ENCODE measurements at regions of chr6 and their contacts with region 1.

Region 1: GRCh38 chr6:134097114-134097707 is 44.8 kb upstream of the SLC2A12 start:
- DNase-seq: peak; percentile 74
- H3K4me3 Mint-ChIP-seq: no peak overlapping the region
- H3K27ac Mint-ChIP-seq: no peak overlapping the region
- H3K4me1 Mint-ChIP-seq: no peaks in the 10 kb centered on the region
- H3K27me3 Mint-ChIP-seq: peaks cover 18% of the 10 kb centered on the region
- CTCF ChIP-seq: peak; percentile 73

Region 2: DNA sequence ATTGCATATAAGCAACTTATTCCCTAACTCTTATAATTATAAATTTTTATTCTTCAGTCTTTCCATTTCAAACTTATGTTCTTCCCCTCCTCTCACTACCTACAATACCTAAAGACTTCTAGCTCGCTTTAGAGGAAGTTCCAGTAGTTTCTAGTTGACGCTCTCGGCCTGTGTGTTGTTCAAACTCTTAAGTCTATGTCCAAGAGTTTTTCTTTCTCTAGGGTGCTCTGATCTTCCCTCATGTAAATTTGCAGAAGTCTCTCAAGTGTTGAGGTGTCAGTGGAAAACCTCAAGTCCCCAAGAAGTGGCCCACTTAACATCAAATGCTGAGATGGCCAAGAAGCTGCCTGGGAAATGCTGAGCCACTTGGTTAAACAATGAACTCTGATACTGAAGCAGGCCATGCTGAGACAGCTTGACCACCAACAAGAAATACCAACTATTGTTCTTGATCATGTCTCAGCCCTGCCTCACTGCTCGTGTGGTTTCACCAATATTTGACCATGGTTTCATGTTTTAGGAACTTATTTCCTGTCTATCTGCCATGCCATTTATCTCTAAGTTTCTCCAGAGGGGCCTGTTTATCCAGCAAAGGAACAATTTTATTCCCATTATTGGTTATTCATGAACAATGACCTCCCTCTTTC is 309.2 kb before region 1 on chr6:
- CTCF ChIA-PET with region 1: no interaction called
- intact Hi-C with region 1: no loop called
- DNase-seq: no peak
- H3K4me3 Mint-ChIP-seq: no peak overlapping the region
- H3K27ac Mint-ChIP-seq: no peak overlapping the region
- H3K4me1 Mint-ChIP-seq: no peaks in the 10 kb centered on the region
- H3K27me3 Mint-ChIP-seq: no peaks in the 10 kb centered on the region
- CTCF ChIP-seq: no peak

Region 3: GRCh38 chr6:133837801-133838349 is 259.3 kb before region 1 on chr6:
- CTCF ChIA-PET with region 1: interaction called, 6 read pairs
- intact Hi-C with region 1: loop called (anchors 10 kb)
- DNase-seq: peak; percentile 86
- H3K4me3 Mint-ChIP-seq: peak overlapping the region; percentile 87
- H3K27ac Mint-ChIP-seq: peak overlapping the region; percentile 70
- H3K4me1 Mint-ChIP-seq: peaks cover 7% of the 10 kb centered on the region
- H3K27me3 Mint-ChIP-seq: no peaks in the 10 kb centered on the region
- CTCF ChIP-seq: peak; percentile 93

Region 4: GRCh38 chr6:133923938-133924593 is 173.1 kb before region 1 on chr6:
- CTCF ChIA-PET with region 1: interaction called, 103 read pairs
- intact Hi-C with region 1: loop called (anchors 1 kb)
- DNase-seq: peak; percentile 70
- H3K4me3 Mint-ChIP-seq: no peak overlapping the region
- H3K27ac Mint-ChIP-seq: no peak overlapping the region
- H3K4me1 Mint-ChIP-seq: no peaks in the 10 kb centered on the region
- H3K27me3 Mint-ChIP-seq: no peaks in the 10 kb centered on the region
- CTCF ChIP-seq: peak; percentile 70

Region 5: DNA sequence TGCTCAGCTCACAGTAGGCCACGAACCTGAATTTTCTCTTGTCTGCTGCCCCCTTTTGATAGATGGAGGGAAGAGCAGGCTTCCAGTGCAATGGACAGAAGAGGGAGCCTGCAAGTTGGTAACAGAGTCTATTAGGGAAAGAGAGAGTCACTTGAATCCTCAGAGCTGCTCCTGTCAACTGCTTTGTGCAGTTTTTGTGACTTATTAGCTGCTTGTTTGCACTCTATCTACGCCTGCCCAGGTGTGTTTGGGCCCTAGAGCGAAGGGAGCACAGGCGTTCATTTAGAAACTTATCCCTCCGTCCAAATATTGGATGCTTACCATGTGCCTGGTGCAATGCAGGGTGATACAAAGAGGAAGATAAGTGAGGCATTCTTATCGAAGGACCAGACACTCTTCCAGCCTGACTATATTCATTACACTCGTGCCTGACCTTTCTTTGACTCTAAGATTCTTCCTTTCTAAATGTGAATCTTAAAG is 33.2 kb before region 1 on chr6:
- CTCF ChIA-PET with region 1: interaction called, 12 read pairs
- intact Hi-C with region 1: no loop called
- DNase-seq: peak; percentile 77
- H3K4me3 Mint-ChIP-seq: no peak overlapping the region
- H3K27ac Mint-ChIP-seq: no peak overlapping the region
- H3K4me1 Mint-ChIP-seq: peaks cover 36% of the 10 kb centered on the region
- H3K27me3 Mint-ChIP-seq: no peaks in the 10 kb centered on the region
- CTCF ChIP-seq: peak; percentile 69

Region 6: GRCh38 chr6:134589512-134589911 is 492.3 kb after region 1 on chr6:
- CTCF ChIA-PET with region 1: interaction called, 19 read pairs
- intact Hi-C with region 1: no loop called
- DNase-seq: no peak
- H3K4me3 Mint-ChIP-seq: no peak overlapping the region
- H3K27ac Mint-ChIP-seq: no peak overlapping the region
- H3K4me1 Mint-ChIP-seq: no peaks in the 10 kb centered on the region
- H3K27me3 Mint-ChIP-seq: no peaks in the 10 kb centered on the region
- CTCF ChIP-seq: no peak